ENCODE measurements at regions of chr17 and their contacts with region 1.

Region 1: DNA sequence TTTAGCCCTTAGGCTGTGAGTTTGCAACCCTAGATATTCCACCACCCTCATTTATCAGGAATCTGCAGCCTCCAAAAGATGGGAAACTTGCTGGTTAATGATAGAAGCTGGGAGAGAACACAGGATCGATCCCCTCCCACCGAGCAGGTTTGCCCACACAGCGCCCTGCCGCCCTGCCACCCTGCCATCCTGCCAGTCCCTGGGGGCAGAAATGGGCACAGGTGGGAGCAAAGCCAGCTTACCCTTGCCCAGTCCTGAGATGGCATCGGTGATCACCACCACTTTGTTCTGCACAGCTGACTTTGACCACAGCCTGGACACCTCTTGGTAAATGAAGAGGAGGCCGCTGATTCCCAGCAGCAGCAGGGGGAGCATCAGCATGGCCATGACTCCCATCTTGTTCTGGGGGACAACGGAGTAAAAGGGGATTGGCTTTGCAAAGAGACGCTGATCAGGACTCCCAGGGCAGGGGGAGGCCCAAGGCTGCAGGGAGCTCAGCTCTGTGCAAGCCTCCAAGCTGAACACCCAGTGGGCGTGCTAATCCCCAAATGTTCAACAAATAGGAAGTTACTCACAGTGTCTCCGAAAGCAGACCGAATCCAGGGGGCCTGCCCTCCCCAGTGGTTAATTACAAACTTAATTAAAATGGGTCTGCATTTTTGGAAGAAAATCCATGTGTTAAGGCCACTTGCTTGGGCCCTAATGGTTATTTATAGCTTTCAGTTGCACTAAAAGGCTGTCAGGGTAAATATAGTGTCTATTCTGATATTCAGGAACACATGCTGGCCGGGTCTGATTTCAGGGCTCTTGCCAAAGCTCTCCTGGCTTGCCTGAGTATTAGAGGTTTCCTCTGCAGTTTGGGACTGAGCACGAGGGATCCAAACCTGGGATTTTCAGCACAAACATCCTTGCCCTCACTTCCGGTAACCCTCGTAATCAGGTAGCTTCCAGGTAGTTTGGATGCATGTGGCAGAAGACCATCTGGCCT is at the start of gene DHRS7C:
- DNase-seq: peak; percentile 68 to 83
- ATAC-seq: peak; percentile 96 to 97
- H3K4me3 ChIP-seq: peak within 1 kb of the TSS; percentile 2 to 40 (median 20)
- H3K27ac ChIP-seq: peak within 1 kb of the TSS; percentile 80 to 90 (median 89)
- H3K4me1 ChIP-seq: peaks cover 29 to 35% of the 10 kb centered on the region in 2 donors
- H3K27me3 ChIP-seq: no peaks in the 10 kb centered on the region
- CTCF ChIP-seq: no peak
- POLR2A ChIP-seq: peak; percentile 14 to 16
- total RNA-seq, gene DHRS7C: 5.1 to 64.6 (median 42.2) TPM

Region 2: DNA sequence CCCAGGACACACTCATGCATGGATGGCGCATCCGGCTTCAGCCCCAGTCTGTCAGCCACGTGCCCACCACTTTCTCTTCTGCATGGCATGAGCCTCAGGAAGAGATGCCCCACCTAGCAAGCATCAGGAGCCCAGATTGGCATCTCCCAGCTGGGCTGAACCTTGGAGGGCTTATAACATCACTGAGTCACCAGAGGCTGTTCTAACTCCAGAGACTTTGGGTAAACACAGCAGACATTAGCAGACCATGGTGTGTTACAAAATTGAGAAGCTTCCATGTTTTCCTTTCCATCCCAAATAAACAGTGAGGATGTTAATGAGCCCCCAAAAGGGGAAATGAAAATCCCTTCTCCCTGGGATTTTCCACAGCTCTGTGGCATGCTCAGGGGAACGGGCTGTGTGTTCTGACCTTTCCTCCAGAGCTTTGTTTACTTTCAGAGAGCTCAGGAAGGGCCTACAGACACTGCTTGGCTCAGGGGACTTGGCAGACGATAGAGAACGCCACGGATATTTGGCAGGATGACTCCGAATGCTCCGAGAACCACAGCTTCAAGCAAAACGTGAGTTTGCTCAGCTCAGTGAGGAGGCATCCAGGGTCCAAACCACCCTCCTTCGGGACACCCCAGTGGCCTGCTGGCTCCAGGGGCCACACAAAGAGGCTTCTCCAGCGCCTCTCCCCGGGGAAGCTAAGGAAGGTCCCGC is 51.0 kb after region 1 on chr17:
- in situ Hi-C with region 1: no loop called
- intact Hi-C with region 1: loop called (anchors 5 kb)
- DNase-seq: peak; percentile 62 to 67
- ATAC-seq: peak; percentile 75 to 82
- H3K4me3 ChIP-seq: peak overlapping the region; percentile 18 to 38 (median 28)
- H3K27ac ChIP-seq: peak overlapping the region; percentile 30 to 87 (median 82)
- H3K4me1 ChIP-seq: peaks cover 33 to 48% of the 10 kb centered on the region in 2 donors
- H3K27me3 ChIP-seq: no peaks in the 10 kb centered on the region
- CTCF ChIP-seq: no peak
- POLR2A ChIP-seq: no peak